Activated CD8-positive, alpha-beta memory T cell treated with anti-CD3 and anti-CD28 coated beads, Interleukin-2, amount 10 ng/mL, durations not matched to agents 7 days and 5 days (primary cell): ENCODE measurements at regions of chr3 and their contacts with region 1.

Region 1: DNA sequence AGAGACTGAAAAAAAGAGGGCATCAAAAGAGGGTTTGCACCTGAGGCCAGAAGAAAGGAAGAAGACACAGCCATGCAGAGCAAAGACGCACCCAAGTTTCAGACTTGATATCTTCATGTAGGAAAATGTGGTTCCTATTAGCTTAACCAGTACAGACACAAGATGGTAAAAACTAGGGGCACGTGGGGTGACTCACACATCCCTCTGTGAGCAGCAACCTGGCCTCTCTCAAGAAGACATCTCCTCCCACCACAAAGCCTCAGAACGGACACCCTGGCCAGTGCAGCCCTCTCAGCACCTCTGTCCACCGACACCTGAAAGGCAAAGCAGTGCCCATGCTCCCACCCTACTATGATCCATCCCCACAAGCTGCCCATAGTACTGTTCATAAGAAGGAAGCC is 33.3 kb downstream of the GLB1 start:
- DNase-seq: peak; percentile 82
- ATAC-seq: peak; percentile 68
- H3K4me3 Mint-ChIP-seq: peak overlapping the region; percentile 29
- H3K27ac Mint-ChIP-seq: peak overlapping the region; percentile 84
- H3K4me1 Mint-ChIP-seq: peaks cover 70% of the 10 kb centered on the region
- H3K27me3 Mint-ChIP-seq: no peaks in the 10 kb centered on the region

Region 2: DNA sequence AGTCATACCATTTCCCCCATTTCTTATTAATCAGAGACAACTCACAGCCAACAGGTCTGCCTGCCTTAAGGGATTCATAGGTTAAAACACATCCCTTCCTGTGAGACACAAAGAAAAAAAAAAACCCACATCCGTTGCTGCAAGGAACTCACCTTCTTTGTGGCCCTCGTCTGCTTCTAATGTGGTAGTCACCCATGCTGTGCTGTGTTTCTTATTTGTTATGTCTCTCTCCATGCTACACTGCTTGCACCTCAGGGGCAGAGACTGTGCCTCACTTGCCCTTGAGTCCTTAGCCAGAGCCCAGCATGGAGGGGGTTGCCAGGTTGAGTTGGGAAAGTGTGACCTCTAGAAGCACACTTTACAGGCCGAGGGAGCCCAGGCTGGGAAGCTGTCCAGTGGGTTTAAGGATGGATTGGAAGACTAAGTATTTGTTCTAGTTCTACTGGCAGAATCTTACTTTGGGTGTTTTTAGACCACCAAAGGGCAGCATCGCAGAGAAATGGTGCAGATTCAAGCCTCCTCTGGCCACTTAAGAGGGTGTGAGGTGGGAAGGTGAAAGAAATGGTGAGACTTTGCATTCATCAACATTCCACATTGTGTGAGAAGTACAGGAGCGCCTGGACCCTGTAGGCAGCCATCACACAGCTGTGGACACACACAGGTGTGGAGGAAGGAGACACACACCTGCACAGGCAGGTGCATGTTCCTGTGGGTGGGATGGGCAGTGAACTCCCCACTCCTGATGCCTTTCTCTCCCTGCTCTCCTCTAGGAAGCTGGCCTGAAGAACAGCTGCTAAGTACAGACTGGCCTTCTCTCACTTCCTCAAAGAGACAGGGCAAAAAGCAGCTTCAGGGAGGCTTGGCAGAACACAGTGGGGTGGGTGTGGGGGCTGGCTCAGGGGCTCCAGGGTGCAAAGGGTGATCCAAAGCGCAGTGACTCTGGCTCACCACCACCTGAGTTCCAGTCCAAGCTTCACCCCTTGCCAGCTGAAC is 15.5 kb before region 1 on chr3:
- CTCF ChIA-PET with region 1: interaction called, 78 read pairs
- DNase-seq: peak; percentile 79
- ATAC-seq: peak; percentile 77
- H3K4me3 Mint-ChIP-seq: peak overlapping the region; percentile 29
- H3K27ac Mint-ChIP-seq: peak overlapping the region; percentile 97
- H3K4me1 Mint-ChIP-seq: peaks cover 79% of the 10 kb centered on the region
- H3K27me3 Mint-ChIP-seq: no peaks in the 10 kb centered on the region

Region 3: GRCh38 chr3:33202711-33203457 is 139.2 kb after region 1 on chr3:
- CTCF ChIA-PET with region 1: no interaction called
- DNase-seq: no peak
- ATAC-seq: no peak
- H3K4me3 Mint-ChIP-seq: no peak overlapping the region
- H3K27ac Mint-ChIP-seq: no peak overlapping the region
- H3K4me1 Mint-ChIP-seq: no peaks in the 10 kb centered on the region
- H3K27me3 Mint-ChIP-seq: peaks cover 6% of the 10 kb centered on the region